Aorta (tissue), 5 donors: ENCODE measurements at regions of chr1 and their contacts with region 1.

Region 1: DNA sequence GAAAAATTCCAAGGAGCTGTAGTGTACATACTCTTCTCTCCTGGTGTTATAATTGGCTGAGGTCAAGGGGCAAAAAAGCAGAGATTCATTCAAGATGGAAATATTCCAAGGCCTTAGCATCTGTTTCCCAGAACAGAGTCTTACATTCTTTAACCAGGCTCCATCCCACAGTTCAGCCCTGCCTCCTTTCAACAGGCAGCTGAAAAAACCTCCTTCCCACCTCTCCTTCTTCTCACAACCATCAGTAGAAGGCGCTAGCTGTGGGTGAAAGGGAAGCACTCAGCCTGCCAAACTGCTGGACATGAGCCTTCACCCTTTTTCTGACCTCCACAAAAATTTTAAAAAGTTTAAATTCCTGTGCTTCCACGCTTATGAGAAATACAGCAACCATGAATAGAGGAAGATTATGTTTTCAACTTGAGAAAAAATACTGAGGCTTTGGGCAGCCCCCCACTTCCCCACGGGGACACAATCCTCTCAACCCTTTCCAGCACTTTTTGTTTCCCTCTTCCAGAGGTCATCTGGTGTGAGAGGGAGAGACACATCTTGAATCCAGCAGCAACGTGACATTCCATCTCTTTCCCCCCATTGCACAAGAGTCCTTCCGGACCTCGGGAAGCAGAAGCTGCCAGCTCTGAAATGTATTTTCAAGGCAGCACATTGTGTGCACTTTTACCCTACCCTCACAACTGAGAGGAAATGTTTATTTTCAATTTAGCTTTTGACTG is 43.2 kb upstream of the FMO2 start:
- DNase-seq: peak in 1 of 2 donors; percentile 78
- ATAC-seq: peak; percentile 90
- H3K4me3 ChIP-seq: no peak overlapping the region
- H3K27ac ChIP-seq: peak overlapping the region; percentile 90 to 95
- H3K4me1 ChIP-seq: peaks cover 3% of the 10 kb centered on the region in 2 donors
- H3K27me3 ChIP-seq: no peaks in the 10 kb centered on the region

Region 2: GRCh38 chr1:170935231-170935630 is 206.6 kb before region 1 on chr1 and contains the start of gene MROH9:
- intact Hi-C with region 1: no loop called
- DNase-seq: no peak
- ATAC-seq: no peak
- H3K4me3 ChIP-seq: no peak within 1 kb of the TSS
- H3K27ac ChIP-seq: no peak within 1 kb of the TSS
- H3K4me1 ChIP-seq: no peaks in the 10 kb centered on the region
- H3K27me3 ChIP-seq: no peaks in the 10 kb centered on the region
- total RNA-seq, gene MROH9: 0.10 to 0.39 TPM

Region 3: DNA sequence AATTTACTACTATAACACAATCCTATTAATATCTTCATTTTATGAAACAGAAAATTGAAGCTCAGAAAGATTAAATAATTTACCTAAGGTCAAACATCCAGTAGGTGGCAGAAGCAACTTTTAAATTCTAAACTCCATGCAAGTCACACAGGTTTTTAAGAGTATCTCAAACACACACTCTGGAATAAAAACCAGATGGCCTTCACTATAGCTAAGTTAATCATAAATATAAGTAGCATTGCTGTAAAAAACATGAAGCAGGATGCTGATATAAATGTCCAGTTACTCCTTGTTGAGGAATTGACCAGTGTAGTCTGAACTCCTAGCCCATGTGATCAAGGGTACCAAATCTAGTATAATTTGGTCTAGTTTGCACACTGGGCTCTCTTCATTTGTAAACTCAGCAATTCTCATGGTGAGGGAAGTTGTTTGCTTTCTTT is 60.5 kb before region 1 on chr1:
- intact Hi-C with region 1: loop called in 1 of 2 experiments (anchors 2 kb)
- DNase-seq: no peak
- ATAC-seq: peak; percentile 81
- H3K4me3 ChIP-seq: peak overlapping the region in 1 of 2 donors; percentile 40
- H3K27ac ChIP-seq: peak overlapping the region; percentile 74 to 90
- H3K4me1 ChIP-seq: peaks cover 0 to 2% of the 10 kb centered on the region in 2 donors
- H3K27me3 ChIP-seq: no peaks in the 10 kb centered on the region

Region 4: DNA sequence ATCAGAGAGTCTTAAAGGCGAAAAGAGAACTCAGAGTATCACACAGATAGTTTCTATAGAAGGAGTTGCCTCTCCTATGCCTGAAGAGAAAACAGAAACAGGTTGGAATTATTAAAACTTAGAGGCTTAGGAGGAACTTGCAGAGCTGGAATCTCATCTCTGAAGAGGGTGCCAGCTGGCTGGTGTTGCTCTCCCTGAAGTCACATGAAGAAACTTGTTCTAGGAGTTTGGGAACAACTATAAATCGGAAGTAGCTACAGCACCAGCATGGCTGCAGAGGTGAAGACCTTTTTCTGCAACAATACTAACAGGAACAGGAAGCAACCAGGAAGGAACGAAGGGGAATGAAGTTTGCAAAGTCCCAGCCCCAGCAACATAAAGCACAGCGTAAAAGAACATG is 15.3 kb before region 1 on chr1:
- intact Hi-C with region 1: no loop called
- DNase-seq: peak; percentile 74 to 75
- ATAC-seq: peak; percentile 45
- H3K4me3 ChIP-seq: no peak overlapping the region
- H3K27ac ChIP-seq: peak overlapping the region; percentile 43 to 84
- H3K4me1 ChIP-seq: peaks cover 11 to 13% of the 10 kb centered on the region in 2 donors
- H3K27me3 ChIP-seq: no peaks in the 10 kb centered on the region

Region 5: DNA sequence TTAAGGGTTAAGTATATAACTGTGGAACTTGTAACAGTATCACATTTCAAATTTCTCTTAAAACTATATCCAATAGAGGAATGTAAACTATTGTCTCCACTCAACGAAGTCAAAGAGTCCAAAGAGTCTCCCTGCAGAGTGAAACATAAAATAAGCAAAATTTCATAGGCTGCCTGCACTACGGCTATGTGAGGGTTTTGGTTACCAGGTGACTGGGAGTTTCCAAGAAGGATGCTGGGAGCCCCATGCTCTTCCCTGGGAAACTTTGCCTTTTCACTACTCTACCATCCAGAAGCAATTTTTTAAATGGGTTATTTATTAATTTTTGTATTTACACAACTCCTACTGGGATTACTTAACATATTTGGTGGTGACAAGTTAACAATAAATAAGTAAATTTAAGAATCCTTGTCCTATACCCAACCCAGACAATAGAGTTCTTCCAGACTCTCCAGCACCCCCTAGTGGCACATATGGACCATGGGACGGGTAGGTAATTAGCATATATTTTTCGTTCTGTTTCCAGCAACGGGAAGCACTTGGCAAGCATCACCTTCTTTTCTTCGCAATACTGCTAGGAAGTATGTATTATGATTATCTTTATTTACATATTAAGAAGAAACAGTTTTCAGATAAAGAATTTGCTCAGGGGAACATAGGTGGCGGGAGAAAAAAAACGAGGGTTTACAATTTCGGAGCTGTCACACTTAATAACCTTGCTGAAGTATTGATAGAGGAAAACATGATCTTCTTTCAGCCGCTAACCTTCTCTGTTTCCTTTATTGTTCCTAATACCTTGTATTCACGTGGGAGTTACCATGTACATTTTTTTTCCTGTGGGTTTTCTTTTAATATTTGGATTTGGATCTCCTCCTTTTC is 46.8 kb after region 1 on chr1:
- intact Hi-C with region 1: loop called (anchors 2 to 5 kb)
- DNase-seq: no peak
- ATAC-seq: peak; percentile 64
- H3K4me3 ChIP-seq: peak overlapping the region; percentile 42 to 94
- H3K27ac ChIP-seq: no peak overlapping the region
- H3K4me1 ChIP-seq: peaks cover 2 to 4% of the 10 kb centered on the region in 2 donors
- H3K27me3 ChIP-seq: no peaks in the 10 kb centered on the region

Region 6: DNA sequence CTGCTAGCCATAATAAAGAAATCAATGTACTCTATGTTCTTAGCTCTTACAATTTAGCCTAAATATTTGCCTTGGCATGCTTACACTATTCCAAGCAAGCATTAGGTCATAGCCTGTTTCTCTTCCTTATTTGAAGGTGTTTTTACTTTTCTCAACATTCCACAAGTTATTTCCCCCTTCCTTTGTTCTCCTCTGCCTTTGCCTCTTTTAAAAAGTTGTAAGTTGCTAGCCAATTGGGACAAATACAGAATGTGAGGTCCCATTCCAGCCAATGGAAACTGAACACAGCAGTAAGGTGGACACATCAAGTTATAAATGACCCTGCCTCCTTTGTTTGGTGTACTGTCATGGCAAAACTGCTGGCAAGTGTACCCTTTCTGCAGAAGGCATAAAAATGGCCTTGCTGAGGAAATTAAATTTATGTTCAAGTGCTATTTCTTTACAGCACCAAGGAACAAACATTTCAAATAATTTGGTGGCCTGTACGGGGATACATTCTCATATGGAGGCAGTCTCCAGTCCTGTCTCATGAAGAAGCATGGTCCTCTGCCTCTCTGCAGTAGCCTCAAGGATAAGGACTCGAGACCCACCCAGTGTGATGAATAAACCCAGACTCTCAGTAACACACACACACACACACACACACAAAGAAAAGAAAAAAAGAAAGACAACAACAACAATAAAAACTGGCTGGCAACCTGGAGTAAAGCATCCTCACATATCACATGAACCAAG is 77.7 kb after region 1 on chr1:
- intact Hi-C with region 1: loop called (anchors 5 kb)
- DNase-seq: no peak
- ATAC-seq: no peak
- H3K4me3 ChIP-seq: no peak overlapping the region
- H3K27ac ChIP-seq: peak overlapping the region; percentile 97 to 98
- H3K4me1 ChIP-seq: peaks cover 5 to 6% of the 10 kb centered on the region in 2 donors
- H3K27me3 ChIP-seq: no peaks in the 10 kb centered on the region